ENCODE measurements at regions of chr2 and their contacts with region 1.

Region 1: GRCh38 chr2:6896930-6897759 is 19.6 kb downstream of the RSAD2 start:
- DNase-seq: no peak
- ATAC-seq: peak; percentile 32

Region 2: GRCh38 chr2:6401301-6401700 is 495.8 kb before region 1 on chr2:
- intact Hi-C with region 1: no loop called
- DNase-seq: no peak
- ATAC-seq: no peak

Region 3: DNA sequence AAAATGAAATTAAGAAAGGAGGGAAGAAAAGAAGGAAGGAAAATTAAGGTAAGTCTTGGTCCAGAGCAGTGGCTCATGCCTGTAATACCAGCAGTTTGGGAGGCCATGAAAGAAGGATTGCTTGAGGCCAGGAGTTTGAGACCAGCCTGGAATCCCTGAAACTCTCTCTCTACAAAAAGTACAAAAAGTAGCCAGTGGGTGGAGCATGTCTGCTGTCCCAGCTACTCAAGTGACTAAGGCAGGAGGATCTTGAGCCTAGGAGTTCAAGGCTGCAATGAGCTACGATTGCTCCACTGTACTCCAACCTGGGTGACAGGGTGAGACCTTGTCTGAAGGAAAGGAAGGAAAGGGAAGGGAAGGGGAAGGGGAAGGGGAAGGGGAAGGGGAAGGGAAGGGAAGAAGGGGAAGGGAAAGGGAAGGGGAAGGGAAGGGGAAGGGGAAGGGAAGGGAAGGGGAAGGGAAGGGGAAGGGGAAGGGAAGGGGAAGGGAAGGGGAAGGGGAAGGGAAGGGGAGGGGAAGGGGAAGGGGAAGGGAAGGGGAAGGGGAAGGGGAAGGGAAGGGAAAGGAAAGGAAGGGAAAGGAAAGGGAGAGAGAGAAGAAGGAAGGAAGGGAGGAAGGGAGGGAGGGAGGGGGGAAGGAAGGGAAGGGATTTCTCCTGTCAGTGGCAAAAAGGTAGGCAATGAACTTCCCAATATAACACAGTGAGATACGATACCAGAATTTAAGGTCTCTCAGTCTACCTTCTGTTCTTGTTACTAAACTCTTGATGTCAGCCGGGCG is 444.3 kb before region 1 on chr2:
- intact Hi-C with region 1: no loop called
- DNase-seq: no peak
- ATAC-seq: no peak

Region 4: DNA sequence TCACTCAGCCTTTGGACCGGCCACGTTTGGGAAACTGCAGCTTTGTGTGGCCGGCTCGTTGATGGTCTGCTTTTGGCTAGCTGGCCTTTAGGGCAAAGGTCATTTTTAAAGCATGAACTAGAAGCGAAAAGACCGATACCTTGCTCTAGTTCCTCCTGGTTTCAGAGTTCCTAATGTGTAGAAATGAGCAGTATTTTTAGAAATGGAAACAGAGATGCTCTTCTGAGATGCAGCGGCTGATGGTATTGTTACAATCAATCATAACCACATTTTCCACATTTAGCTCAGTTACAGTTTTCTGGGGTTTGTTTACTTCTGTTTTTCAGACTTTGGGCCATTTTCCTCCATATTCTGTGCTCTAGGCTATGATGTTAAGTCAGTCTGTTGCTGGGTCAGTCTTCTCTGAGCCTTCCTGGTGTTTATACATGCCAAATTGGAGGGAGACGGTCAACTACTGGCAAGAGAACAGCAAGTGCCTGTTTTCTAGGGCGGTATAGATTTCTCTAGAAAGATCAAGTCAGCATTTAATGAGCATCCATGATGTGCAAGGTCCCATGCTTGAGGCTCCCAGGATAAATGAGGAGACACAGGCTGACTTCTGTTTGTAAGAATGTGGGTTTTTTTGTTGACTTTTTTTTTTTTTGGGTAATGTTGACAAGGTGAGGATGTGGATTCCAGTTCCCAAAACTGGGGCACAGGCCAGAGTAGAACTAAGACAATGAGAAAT is 48.1 kb after region 1 on chr2:
- intact Hi-C with region 1: no loop called
- DNase-seq: no peak
- ATAC-seq: no peak

Region 5: DNA sequence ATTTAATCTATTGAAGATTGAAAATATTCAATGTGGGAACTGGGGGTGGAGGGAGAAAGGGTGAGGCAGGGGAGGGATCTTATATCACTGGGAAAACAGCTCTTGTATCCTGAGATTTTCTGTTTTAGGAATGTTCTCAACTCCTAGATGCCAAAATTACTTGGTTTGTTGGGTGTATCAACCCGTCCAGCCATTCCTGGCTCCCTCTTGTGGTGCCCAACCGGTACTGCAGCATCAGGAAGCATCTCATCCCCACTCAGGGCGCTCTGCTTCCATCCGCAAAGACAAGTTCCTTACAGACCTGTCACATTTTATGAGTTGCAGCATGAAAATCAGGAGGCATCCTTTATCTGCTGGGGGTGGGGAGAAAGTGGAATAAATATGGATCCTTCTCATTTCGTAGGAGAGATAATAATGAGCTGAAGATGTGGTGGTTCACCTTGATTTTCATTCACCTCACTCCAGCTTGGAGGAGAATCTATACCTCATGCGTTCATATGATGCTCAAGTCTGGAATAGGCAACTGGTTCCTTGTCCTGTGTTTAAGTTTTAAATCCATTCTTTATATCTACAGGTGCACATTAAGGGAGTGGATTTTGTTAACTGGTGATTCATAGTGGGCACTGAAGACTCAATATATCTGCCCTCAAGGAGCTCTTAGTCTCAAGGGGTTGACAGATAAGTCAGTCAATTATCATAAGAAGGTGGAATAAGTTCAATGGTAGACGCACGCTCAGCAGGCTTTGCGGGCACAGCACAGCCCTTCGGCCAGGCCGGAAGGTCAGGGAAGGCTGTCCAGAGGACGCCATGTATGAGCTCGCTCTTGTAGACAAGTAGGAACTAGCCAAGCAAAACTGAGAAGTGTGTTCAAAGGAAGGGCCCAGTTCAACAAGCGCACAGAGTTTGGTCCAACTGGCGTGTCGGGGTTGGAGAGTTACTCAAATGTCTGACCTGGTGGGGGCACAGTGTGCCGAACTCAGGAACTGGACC is 147.4 kb after region 1 on chr2:
- intact Hi-C with region 1: loop called (anchors 5 kb)
- DNase-seq: peak; percentile 80
- ATAC-seq: peak; percentile 86

Measured in left ventricle myocardium superior (tissue), 1 donor.